ENCODE measurements at regions of chr16 and their contacts with region 1.

Region 1: GRCh38 chr16:19933740-19934139 is 49.1 kb upstream of the GPRC5B start:
- DNase-seq: no peak
- H3K4me3 ChIP-seq: no peak overlapping the region
- H3K27ac ChIP-seq: no peak overlapping the region
- H3K4me1 ChIP-seq: no peaks in the 10 kb centered on the region
- H3K27me3 ChIP-seq: no peaks in the 10 kb centered on the region
- CTCF ChIP-seq: no peak
- POLR2A ChIP-seq: no peak

Region 2: DNA sequence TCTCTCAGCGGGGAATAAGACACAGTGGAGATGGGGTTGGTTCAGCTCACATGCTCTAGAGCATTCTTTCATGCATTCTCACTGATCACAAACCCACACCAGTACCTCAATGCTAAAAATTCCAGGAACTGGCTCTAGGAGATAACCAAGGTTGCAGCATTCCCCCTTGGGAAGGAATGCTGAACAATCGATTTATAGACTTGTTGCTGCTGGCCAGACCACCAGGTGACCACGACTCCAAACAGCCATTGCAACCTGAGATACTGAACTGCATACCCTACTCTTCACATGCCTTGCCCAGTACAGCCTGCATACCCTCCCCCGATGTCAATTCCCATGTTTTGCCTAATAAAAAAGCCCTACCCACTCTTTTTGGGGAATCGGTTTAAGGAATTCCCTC is 26.0 kb after region 1 on chr16:
- CTCF ChIA-PET with region 1: no interaction called
- POLR2A ChIA-PET with region 1: no interaction called
- dilution Hi-C with region 1: no loop called
- intact Hi-C with region 1: loop called (anchors 1 kb)
- DNase-seq: no peak
- H3K4me3 ChIP-seq: no peak overlapping the region
- H3K27ac ChIP-seq: no peak overlapping the region
- H3K4me1 ChIP-seq: no peaks in the 10 kb centered on the region
- H3K27me3 ChIP-seq: no peaks in the 10 kb centered on the region
- CTCF ChIP-seq: no peak
- POLR2A ChIP-seq: no peak

Region 3: DNA sequence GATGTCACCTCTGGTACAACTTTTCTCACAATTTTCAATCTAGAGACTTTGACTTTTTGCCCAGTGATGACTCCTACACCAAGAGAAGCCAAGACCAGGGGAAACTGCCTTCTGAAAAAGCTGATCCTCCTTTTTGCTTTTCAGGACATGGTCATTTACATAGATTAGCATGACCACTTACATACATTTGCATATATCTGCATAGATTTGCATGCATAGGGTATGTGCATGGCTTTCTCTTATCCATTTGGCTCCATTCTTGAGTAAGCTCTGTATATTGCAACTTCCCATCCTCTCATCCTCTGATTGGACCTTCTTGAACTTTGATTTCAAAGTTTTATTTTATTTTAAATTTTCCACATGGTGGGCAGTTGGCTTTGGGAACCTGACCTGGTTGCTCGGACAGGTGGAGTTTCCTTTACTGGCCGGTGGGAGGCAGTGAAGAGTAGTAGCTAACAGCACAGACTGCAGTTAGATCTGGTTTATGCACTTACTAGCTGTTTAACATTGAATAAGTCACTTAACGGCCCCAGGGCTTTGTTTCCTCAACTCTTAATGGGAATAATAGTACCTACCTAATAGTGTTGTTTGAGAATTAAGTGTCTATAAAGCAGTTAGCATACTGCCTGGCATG is 47.0 kb after region 1 on chr16:
- CTCF ChIA-PET with region 1: no interaction called
- POLR2A ChIA-PET with region 1: no interaction called
- dilution Hi-C with region 1: no loop called
- intact Hi-C with region 1: no loop called
- DNase-seq: peak; percentile 11
- H3K4me3 ChIP-seq: no peak overlapping the region
- H3K27ac ChIP-seq: no peak overlapping the region
- H3K4me1 ChIP-seq: no peaks in the 10 kb centered on the region
- H3K27me3 ChIP-seq: no peaks in the 10 kb centered on the region
- CTCF ChIP-seq: peak; percentile 44 to 46
- POLR2A ChIP-seq: no peak